Heart right ventricle (tissue), 16 donors: ENCODE measurements at regions of chr1 and their contacts with region 1.

Region 1: GRCh38 chr1:92291372-92291999 is 7.3 kb downstream of the GLMN start:
- DNase-seq: no peak
- ATAC-seq: peak in 3 of 8 donors; percentile 42 to 56 (median 55)
- H3K4me3 ChIP-seq: no peak overlapping the region
- H3K27ac ChIP-seq: no peak overlapping the region
- H3K4me1 ChIP-seq: no peaks in the 10 kb centered on the region
- H3K27me3 ChIP-seq: no peaks in the 10 kb centered on the region
- CTCF ChIP-seq: peak; percentile 14 to 76 (median 64)

Region 2: GRCh38 chr1:91500756-91501522 is 790.5 kb before region 1 on chr1 and contains the start of gene CDC7:
- intact Hi-C with region 1: loop called in 4 of 10 experiments (anchors 10 kb)
- DNase-seq: peak; percentile 92
- ATAC-seq: peak; percentile 95 to 99 (median 97)
- H3K4me3 ChIP-seq: peak within 1 kb of the TSS; percentile 46 to 75 (median 64)
- H3K27ac ChIP-seq: peak within 1 kb of the TSS; percentile 9 to 92 (median 82)
- H3K4me1 ChIP-seq: peaks cover 0 to 38% (median 15%) of the 10 kb centered on the region in 9 donors
- H3K27me3 ChIP-seq: no peaks in the 10 kb centered on the region
- CTCF ChIP-seq: peak in 8 of 9 donors; percentile 12 to 63 (median 50)
- total RNA-seq, gene CDC7: 0.26 to 4.0 (median 0.73) TPM

Region 3: GRCh38 chr1:91511386-91511785 is 780.1 kb before region 1 on chr1:
- intact Hi-C with region 1: loop called in 9 of 10 experiments (anchors 5 to 10 kb)
- DNase-seq: no peak
- ATAC-seq: peak in 2 of 8 donors; percentile 46 to 52
- H3K4me3 ChIP-seq: no peak overlapping the region
- H3K27ac ChIP-seq: no peak overlapping the region
- H3K4me1 ChIP-seq: no peaks in the 10 kb centered on the region
- H3K27me3 ChIP-seq: no peaks in the 10 kb centered on the region
- CTCF ChIP-seq: peak; percentile 29 to 78 (median 67)

Region 4: GRCh38 chr1:91997607-91998195 is 293.8 kb before region 1 on chr1:
- intact Hi-C with region 1: loop called in 6 of 10 experiments (anchors 5 to 10 kb)
- DNase-seq: peak in 1 of 2 donors; percentile 7
- ATAC-seq: no peak
- H3K4me3 ChIP-seq: no peak overlapping the region
- H3K27ac ChIP-seq: no peak overlapping the region
- H3K4me1 ChIP-seq: no peaks in the 10 kb centered on the region
- H3K27me3 ChIP-seq: no peaks in the 10 kb centered on the region
- CTCF ChIP-seq: peak in 7 of 9 donors; percentile 34 to 62 (median 52)

Region 5: DNA sequence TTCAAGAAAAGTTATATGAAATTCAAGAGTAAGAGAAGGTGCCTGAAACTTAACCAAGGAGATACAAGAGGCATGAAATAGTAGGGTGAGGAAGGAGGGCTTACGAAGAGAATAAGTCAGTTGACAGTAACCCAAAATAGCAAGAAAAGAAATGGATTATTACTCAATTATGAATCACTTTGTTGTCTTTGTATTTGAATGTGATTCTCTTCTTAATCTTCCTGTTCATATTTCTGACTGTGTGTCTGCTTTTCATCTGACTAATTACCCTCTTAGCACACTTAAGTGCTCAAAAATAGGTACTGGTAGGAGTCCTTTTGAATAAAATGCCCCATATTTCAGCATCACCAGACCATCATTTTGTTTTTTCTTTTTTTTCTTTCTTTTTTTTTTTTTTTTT is 32.1 kb before region 1 on chr1:
- intact Hi-C with region 1: no loop called
- DNase-seq: no peak
- ATAC-seq: no peak
- H3K4me3 ChIP-seq: no peak overlapping the region
- H3K27ac ChIP-seq: no peak overlapping the region
- H3K4me1 ChIP-seq: no peaks in the 10 kb centered on the region
- H3K27me3 ChIP-seq: no peaks in the 10 kb centered on the region
- CTCF ChIP-seq: no peak

Region 6: DNA sequence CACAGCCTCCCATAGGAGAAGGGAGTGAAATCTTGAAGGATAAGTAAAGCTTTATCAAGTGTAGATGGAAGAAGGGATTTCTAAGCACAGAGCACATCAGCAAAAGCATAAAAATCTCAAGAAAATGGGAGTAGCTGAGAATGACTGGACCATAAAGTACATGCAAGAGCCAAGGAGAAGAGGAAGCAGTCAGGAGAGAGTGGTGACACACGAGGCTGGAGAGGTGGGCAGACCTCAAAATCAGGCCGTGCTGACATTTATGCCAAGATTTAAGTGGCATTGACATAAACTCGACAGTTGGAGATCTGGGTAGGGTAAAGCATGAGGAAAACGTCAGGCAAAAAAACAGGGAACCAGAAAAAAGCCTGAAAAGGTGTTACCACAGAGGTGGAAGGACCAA is 132.9 kb after region 1 on chr1:
- intact Hi-C with region 1: no loop called
- DNase-seq: no peak
- ATAC-seq: no peak
- H3K4me3 ChIP-seq: no peak overlapping the region
- H3K27ac ChIP-seq: no peak overlapping the region
- H3K4me1 ChIP-seq: no peaks in the 10 kb centered on the region
- H3K27me3 ChIP-seq: no peaks in the 10 kb centered on the region
- CTCF ChIP-seq: no peak

Region 7: DNA sequence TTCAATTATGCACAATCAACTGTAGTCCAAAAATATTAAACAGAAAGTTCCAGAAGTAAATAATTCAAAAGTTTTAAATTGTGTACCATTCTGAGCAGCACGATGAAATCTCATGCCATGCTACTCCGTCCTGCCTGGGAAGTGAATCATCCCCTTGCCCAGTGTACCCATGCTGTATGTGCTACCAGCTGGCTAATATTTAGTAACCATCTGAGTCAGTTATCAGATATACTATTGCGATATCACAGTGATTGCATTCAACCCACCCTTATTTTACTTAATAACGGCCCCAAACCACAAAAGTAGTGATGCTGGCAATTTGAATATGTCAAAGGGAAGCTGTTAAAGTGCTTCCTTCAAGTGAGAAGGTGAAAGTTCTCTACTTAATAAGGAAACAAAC is 437.2 kb after region 1 on chr1:
- intact Hi-C with region 1: no loop called
- DNase-seq: no peak
- ATAC-seq: no peak
- H3K4me3 ChIP-seq: no peak overlapping the region
- H3K27ac ChIP-seq: no peak overlapping the region
- H3K4me1 ChIP-seq: peaks cover 0 to 10% (median 0%) of the 10 kb centered on the region in 9 donors
- H3K27me3 ChIP-seq: no peaks in the 10 kb centered on the region
- CTCF ChIP-seq: no peak